Gastrocnemius medialis (tissue), 4 donors: ENCODE measurements at regions of chr2 and their contacts with region 1.

Region 1: GRCh38 chr2:161077367-161078210 is 82.6 kb upstream of the TANK start:
- DNase-seq: peak in 1 of 2 donors; percentile 23
- ATAC-seq: peak; percentile 54 to 77
- H3K4me3 ChIP-seq: no peak overlapping the region
- H3K27ac ChIP-seq: peak overlapping the region; percentile 20 to 55 (median 54)
- H3K4me1 ChIP-seq: no peaks in the 10 kb centered on the region
- H3K27me3 ChIP-seq: no peaks in the 10 kb centered on the region
- CTCF ChIP-seq: no peak
- POLR2A ChIP-seq: no peak

Region 2: GRCh38 chr2:161134547-161135518 is 57.2 kb after region 1 on chr2:
- in situ Hi-C with region 1: loop called in 1 of 4 experiments (anchors 5 kb)
- intact Hi-C with region 1: no loop called
- DNase-seq: no peak
- ATAC-seq: no peak
- H3K4me3 ChIP-seq: no peak overlapping the region
- H3K27ac ChIP-seq: peak overlapping the region in 3 of 4 donors; percentile 5 to 30 (median 27)
- H3K4me1 ChIP-seq: peaks cover 8 to 17% of the 10 kb centered on the region in 2 donors
- H3K27me3 ChIP-seq: no peaks in the 10 kb centered on the region
- CTCF ChIP-seq: no peak
- POLR2A ChIP-seq: no peak

Region 3: GRCh38 chr2:161625314-161625919 is 547.8 kb after region 1 on chr2:
- in situ Hi-C with region 1: no loop called
- intact Hi-C with region 1: no loop called
- DNase-seq: no peak
- ATAC-seq: no peak
- H3K4me3 ChIP-seq: no peak overlapping the region
- H3K27ac ChIP-seq: no peak overlapping the region
- H3K4me1 ChIP-seq: no peaks in the 10 kb centered on the region
- H3K27me3 ChIP-seq: peaks cover 0 to 11% (median 10%) of the 10 kb centered on the region in 3 donors
- CTCF ChIP-seq: no peak
- POLR2A ChIP-seq: no peak